Prostate gland (tissue), 2 donors: ENCODE measurements at regions of chr15 and their contacts with region 1.

Region 1: DNA sequence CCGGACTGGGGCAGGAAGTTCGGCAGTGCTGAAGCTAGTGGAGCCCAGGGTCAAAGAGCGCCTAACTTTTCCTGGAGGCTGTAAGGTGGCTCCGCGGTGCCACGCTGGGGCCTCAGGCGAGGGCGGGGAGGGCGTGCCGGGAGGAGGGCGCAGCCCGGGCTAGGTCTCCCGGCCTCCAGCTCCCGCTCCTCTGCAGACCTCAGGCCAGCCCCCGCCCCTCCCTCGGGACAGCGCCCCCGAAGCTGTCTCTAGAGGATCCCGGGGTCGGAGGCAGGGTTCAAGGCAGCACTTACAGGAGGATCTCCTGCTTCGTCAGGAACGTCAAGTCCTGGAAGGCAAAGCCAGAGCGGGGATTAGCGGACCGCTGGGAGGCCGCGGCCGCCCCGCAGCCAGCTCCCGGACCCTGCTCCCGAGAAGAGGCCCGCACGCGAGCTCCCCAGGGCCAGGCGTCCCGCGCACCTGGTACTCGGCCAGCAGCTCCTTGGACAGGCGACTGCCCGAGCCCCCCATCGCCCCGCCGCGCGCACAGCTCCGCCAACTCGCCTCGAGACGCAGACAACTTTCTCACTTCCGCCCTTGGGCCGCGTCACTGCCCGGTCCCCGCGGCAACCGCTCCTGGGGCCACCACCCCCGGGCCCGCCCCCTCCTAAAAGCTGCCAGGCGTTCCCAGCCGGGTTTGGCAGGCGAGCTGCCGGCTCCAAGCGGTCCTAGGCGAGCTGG is at the start of gene CIB1:
- DNase-seq: peak; percentile 98
- H3K4me3 ChIP-seq: peak within 1 kb of the TSS; percentile 69 to 83
- H3K27ac ChIP-seq: peak within 1 kb of the TSS; percentile 90 to 95
- H3K4me1 ChIP-seq: peaks cover 17% of the 10 kb centered on the region
- H3K27me3 ChIP-seq: no peaks in the 10 kb centered on the region
- CTCF ChIP-seq: peak in 2 of 4 experiments; percentile 2 to 61
- POLR2A ChIP-seq: peak; percentile 84
- total RNA-seq, gene CIB1: 48.3 to 104 TPM

Region 2: GRCh38 chr15:90002428-90002844 is 231.1 kb before region 1 on chr15:
- intact Hi-C with region 1: no loop called
- DNase-seq: peak; percentile 31
- H3K4me3 ChIP-seq: peak overlapping the region; percentile 89 to 90
- H3K27ac ChIP-seq: peak overlapping the region; percentile 90 to 93
- H3K4me1 ChIP-seq: no peaks in the 10 kb centered on the region
- H3K27me3 ChIP-seq: no peaks in the 10 kb centered on the region
- CTCF ChIP-seq: no peak
- POLR2A ChIP-seq: peak; percentile 25

Region 3: GRCh38 chr15:90249203-90249863 is 15.8 kb after region 1 on chr15 and contains the start of gene TTLL13:
- intact Hi-C with region 1: loop called (anchors 2 kb)
- DNase-seq: peak; percentile 92
- H3K4me3 ChIP-seq: peak within 1 kb of the TSS; percentile 43 to 52
- H3K27ac ChIP-seq: peak within 1 kb of the TSS in 1 of 2 donors; percentile 22
- H3K4me1 ChIP-seq: no peaks in the 10 kb centered on the region
- H3K27me3 ChIP-seq: no peaks in the 10 kb centered on the region
- CTCF ChIP-seq: no peak
- POLR2A ChIP-seq: peak; percentile 38
- total RNA-seq, gene TTLL13: 0.51 TPM in 1 of 2 donors, not detected in the other

Region 4: GRCh38 chr15:91068966-91069365 is 835.4 kb after region 1 on chr15:
- intact Hi-C with region 1: no loop called
- DNase-seq: no peak
- H3K4me3 ChIP-seq: no peak overlapping the region
- H3K27ac ChIP-seq: no peak overlapping the region
- H3K4me1 ChIP-seq: no peaks in the 10 kb centered on the region
- H3K27me3 ChIP-seq: no peaks in the 10 kb centered on the region
- CTCF ChIP-seq: no peak
- POLR2A ChIP-seq: no peak